HepG2 (cell line): ENCODE measurements at regions of chr2 and their contacts with region 1.

Region 1: DNA sequence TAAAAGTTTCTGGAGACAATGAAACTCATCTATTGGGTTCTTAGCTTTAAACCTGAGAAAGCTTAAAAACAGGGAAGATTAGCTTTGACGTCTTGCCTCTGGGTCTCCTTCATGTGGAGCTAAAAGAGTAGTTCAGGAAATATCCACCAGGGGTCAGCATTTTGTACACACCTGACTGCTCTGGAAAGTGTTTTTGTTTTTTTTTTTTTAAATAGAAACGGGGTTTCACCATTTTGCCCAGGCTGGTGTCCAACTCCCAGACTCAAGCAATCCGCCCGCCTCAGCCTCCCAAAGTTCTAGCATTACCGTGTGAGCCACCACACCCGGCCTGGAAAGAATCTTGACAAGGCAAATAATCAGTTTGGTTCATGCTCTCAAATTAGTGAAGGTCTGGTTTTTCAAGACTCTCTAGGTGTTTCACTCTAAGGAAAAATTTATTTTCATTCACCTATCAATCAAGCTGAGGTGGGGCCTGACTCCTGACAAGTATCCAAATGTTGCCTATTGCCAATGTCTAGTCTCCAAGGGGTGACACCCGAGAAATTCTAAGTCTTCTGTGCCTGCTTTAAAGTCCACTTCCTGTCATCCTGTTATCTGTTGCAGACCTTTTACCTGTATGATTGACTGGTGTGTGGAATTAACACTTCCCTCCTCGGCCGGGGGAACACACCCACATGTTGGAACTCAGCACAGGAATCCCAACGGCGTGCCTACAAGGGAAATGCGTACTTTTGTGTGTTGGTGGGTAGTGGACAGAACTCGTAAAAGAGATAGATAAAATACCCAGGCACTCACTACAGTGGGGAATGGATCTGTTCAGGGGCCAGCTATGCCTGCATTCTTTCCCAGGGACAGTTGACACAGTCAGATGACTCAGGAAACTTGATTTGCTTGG is 11.3 kb downstream of the IL1RN start:
- DNase-seq: peak; percentile 76
- ATAC-seq: peak; percentile 78
- H3K4me3 ChIP-seq: peak overlapping the region; percentile 11 to 52 (median 36); a peak in 4 of 6 replicates
- H3K27ac ChIP-seq: no peak overlapping the region
- H3K4me1 ChIP-seq: peaks cover 55% of the 10 kb centered on the region
- H3K27me3 ChIP-seq: peaks cover 0 to 11% of the 10 kb centered on the region in 2 experiments; a peak in 1 of 5 replicates
- CTCF ChIP-seq: peak; percentile 82
- EP300 ChIP-seq: no peak
- POLR2A ChIP-seq: no peak
- RAD21 ChIP-seq: peak; percentile 61

Region 2: DNA sequence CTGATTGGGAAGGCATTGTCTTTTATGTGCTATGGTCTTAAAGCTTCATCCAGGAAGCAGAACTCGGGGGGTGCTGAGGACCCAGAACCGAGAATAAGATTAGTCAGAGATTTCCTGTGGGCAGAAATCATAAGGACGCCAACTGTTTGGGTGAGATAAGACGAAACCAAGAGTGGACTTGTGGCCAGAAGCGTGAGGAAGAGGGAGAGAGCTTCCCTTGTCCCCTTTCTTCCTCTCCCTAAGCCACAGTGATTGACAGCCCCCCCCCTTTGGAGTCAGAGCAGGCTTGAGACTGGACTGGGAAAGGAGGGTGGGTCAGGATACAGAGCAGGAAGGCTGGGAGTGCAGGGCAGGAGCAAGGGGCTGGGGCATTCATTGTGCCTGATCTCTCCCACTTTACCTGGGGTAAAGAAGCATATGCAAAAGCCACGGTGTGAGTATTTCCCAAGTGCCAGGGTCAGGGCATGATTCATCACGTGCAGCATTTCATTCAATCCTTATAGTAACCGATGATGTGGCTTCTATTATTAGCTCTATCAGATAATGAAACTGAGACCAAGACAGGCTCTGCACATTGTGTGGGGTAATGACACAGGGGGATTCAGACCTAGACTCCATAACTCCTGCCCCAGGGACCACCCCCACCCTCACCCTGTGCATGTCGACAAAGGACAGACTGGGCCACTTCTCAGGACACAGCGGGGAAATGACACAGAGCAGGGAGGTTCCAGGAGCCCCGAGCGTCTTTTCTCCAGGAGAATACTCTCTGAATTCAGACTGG is 14.3 kb before region 1 on chr2:
- CTCF ChIA-PET with region 1: no interaction called
- POLR2A ChIA-PET with region 1: interaction called, 40 read pairs
- in situ Hi-C with region 1: no loop called
- intact Hi-C with region 1: no loop called
- DNase-seq: peak; percentile 23
- ATAC-seq: no peak
- H3K4me3 ChIP-seq: no peak overlapping the region
- H3K27ac ChIP-seq: peak overlapping the region; percentile 92
- H3K4me1 ChIP-seq: peaks cover 80% of the 10 kb centered on the region
- H3K27me3 ChIP-seq: peaks cover 0 to 6% of the 10 kb centered on the region in 2 experiments; a peak in 2 of 5 replicates
- CTCF ChIP-seq: no peak
- EP300 ChIP-seq: no peak
- POLR2A ChIP-seq: no peak
- RAD21 ChIP-seq: no peak

Region 3: DNA sequence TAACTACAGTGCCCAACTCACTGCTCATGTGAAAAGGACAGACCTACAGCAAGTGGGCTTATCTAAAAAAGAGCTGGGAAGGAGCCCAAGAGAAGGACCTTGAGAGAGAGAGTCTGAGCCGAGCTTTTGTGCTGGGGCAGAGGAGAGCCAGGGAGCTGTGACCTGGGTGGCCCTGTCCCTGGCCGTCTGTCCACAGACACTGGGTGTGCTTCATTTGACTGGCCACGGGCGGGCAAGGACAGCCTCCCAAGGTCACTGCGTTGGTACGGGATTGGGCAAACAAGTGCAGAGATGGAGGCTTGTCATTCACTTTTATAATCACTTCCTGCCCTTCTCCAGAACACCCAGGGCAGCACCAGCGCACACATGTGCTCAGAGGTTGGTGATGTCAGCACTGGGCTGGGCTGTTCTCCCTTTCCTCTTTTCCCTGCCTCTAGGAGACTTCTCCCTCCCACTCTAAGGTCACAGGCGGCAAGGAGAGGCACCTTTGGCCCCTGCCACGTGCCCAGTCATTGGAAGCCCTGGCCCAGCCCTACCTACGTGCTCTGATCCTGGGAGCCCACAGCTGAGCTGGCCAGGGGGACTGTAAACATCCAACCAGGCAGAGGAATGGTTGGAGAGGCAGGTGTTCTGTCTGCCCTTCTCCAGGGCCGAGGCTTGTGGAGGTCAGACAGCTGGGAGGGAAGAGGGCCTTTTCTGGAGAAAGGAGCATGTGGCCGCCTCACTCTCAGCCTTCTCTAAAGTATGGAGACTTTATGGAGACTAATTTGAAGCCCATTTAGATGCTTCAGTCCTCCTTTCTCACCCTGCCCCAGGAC is 28.6 kb after region 1 on chr2:
- CTCF ChIA-PET with region 1: interaction called, 6 read pairs
- POLR2A ChIA-PET with region 1: interaction called, 20 read pairs
- in situ Hi-C with region 1: no loop called
- intact Hi-C with region 1: no loop called
- DNase-seq: peak; percentile 93
- ATAC-seq: peak; percentile 89
- H3K4me3 ChIP-seq: peak overlapping the region in 2 of 3 experiments; percentile 0 to 37; a peak in 3 of 6 replicates
- H3K27ac ChIP-seq: peak overlapping the region; percentile 75
- H3K4me1 ChIP-seq: peaks cover 71% of the 10 kb centered on the region
- H3K27me3 ChIP-seq: no peaks in the 10 kb centered on the region
- CTCF ChIP-seq: peak; percentile 40; the same call in 1 of the 2 replicates
- EP300 ChIP-seq: peak; percentile 7 to 75; a peak in 2 of 4 replicates
- POLR2A ChIP-seq: peak; percentile 89 to 93
- RAD21 ChIP-seq: 0 out of 2 replicates have a peak, but pooled peaks have one; percentile 9

Region 4: GRCh38 chr2:113192438-113193100 is 53.9 kb after region 1 on chr2:
- CTCF ChIA-PET with region 1: interaction called, 80 read pairs
- POLR2A ChIA-PET with region 1: no interaction called
- in situ Hi-C with region 1: loop called (anchors 5 kb)
- intact Hi-C with region 1: no loop called
- DNase-seq: no peak
- ATAC-seq: peak; percentile 83
- H3K4me3 ChIP-seq: no peak overlapping the region
- H3K27ac ChIP-seq: no peak overlapping the region
- H3K4me1 ChIP-seq: no peaks in the 10 kb centered on the region
- H3K27me3 ChIP-seq: no peaks in the 10 kb centered on the region; a peak in 1 of 5 replicates
- CTCF ChIP-seq: peak; percentile 73
- EP300 ChIP-seq: no peak
- POLR2A ChIP-seq: no peak
- RAD21 ChIP-seq: peak; percentile 58

Region 5: DNA sequence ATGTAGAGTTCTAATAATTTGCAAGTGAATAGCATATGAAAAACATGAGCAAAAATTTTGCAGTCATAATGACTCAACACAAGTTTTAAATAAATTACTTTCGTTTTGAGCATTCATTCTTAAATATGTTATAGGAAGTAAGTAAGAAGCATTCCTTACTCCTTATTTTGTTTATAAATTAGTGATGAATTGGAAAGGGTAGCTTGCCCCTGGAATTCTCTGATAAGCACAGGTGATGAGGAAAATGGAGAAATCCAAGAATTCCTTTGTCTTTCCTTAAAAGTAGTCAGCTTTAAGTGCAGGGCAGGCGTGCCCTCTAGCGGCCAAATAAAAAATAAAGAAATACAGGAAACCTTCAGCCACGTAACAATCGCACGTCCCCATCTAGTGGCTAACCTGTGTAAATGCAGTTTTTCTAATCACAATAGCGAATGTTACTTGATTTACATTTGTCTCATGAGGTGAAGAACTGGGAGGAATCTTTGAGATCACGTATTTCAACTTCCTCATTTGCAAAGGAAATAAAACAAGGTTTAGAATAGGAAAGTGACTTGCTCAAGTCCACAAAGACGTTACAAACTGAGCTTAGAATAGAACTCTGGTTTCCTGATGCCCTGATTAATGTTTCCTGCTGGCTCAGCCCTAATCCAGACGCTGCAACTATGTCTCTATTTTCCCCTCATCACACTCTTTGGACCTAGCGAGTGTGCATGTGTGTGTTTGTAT is 251.6 kb after region 1 on chr2:
- CTCF ChIA-PET with region 1: interaction called, 24 read pairs
- POLR2A ChIA-PET with region 1: no interaction called
- in situ Hi-C with region 1: no loop called
- intact Hi-C with region 1: loop called (anchors 2 kb)
- DNase-seq: peak; percentile 79
- ATAC-seq: peak; percentile 83
- H3K4me3 ChIP-seq: no peak overlapping the region
- H3K27ac ChIP-seq: no peak overlapping the region
- H3K4me1 ChIP-seq: no peaks in the 10 kb centered on the region
- H3K27me3 ChIP-seq: no peaks in the 10 kb centered on the region
- CTCF ChIP-seq: peak; percentile 96
- EP300 ChIP-seq: no peak
- POLR2A ChIP-seq: no peak
- RAD21 ChIP-seq: peak; percentile 86